Activated CD4-positive, alpha-beta memory T cell treated with anti-CD3 and anti-CD28 coated beads for 36 hours (primary cell): ENCODE measurements at regions of chr10 and their contacts with region 1.

Region 1: DNA sequence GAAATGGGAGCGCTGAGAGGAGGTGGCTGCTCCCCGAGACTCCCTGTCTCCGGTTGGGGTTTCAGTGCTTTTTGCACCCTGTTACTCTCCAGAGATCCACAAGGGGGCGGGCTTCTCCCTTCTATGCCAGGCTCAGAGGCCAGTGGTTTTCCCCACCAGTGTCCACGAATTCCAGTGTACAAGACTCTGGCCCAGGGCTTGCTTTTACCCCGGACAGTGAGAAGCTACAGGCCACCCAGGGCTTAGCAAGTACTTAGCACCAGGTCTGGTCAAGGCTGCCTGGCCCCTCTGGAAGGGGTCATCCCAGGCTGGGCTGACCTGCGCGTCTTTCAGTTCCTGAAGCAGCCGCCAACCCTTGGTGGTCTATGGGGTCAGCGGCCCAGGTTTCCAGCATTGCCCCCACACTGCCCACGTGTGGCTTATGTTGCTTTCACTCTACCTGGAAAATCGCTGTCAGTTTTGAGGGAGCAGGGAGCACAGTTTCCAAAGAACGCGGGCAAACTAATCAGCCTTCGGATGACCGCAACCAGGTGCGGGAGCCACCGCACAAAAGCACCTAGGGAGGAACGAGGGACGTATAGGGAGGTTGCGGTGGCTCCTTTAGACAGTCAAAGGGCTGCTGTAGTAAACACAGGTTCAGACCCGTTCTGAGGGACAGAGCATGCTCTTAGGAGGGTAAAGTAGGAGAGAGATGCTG is 6.8 kb downstream of the CYP26A1 start:
- DNase-seq: peak; percentile 68
- H3K4me3 Mint-ChIP-seq: no peak overlapping the region
- H3K27ac Mint-ChIP-seq: no peak overlapping the region
- H3K4me1 Mint-ChIP-seq: peaks cover 7% of the 10 kb centered on the region
- H3K27me3 Mint-ChIP-seq: peaks cover 40% of the 10 kb centered on the region

Region 2: DNA sequence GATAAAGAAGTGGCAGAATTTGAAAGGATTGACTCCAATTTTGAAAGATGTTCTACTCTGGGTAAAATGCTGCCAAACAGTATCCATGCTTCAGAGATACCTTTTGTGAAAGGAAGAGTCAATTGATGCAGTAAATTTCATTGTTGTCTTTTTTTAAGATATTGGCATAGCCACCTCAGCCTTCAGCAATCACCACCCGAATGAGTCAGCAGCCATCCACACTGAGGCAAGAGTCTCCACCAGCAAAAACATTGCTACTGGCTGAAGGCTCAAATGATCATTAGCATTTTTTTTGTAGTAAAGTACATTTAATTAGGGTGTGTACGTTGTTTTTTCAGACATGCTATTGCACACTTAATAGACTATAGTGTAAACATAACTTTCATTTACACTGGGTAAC is 51.6 kb before region 1 on chr10:
- CTCF ChIA-PET with region 1: no interaction called
- POLR2A ChIA-PET with region 1: no interaction called
- intact Hi-C with region 1: no loop called
- DNase-seq: no peak
- H3K4me3 Mint-ChIP-seq: no peak overlapping the region
- H3K27ac Mint-ChIP-seq: no peak overlapping the region
- H3K4me1 Mint-ChIP-seq: no peaks in the 10 kb centered on the region
- H3K27me3 Mint-ChIP-seq: no peaks in the 10 kb centered on the region

Region 3: GRCh38 chr10:93190372-93190771 is 109.9 kb after region 1 on chr10:
- CTCF ChIA-PET with region 1: no interaction called
- POLR2A ChIA-PET with region 1: no interaction called
- intact Hi-C with region 1: no loop called
- DNase-seq: no peak
- H3K4me3 Mint-ChIP-seq: no peak overlapping the region
- H3K27ac Mint-ChIP-seq: no peak overlapping the region
- H3K4me1 Mint-ChIP-seq: no peaks in the 10 kb centered on the region
- H3K27me3 Mint-ChIP-seq: peaks cover 2% of the 10 kb centered on the region

Region 4: DNA sequence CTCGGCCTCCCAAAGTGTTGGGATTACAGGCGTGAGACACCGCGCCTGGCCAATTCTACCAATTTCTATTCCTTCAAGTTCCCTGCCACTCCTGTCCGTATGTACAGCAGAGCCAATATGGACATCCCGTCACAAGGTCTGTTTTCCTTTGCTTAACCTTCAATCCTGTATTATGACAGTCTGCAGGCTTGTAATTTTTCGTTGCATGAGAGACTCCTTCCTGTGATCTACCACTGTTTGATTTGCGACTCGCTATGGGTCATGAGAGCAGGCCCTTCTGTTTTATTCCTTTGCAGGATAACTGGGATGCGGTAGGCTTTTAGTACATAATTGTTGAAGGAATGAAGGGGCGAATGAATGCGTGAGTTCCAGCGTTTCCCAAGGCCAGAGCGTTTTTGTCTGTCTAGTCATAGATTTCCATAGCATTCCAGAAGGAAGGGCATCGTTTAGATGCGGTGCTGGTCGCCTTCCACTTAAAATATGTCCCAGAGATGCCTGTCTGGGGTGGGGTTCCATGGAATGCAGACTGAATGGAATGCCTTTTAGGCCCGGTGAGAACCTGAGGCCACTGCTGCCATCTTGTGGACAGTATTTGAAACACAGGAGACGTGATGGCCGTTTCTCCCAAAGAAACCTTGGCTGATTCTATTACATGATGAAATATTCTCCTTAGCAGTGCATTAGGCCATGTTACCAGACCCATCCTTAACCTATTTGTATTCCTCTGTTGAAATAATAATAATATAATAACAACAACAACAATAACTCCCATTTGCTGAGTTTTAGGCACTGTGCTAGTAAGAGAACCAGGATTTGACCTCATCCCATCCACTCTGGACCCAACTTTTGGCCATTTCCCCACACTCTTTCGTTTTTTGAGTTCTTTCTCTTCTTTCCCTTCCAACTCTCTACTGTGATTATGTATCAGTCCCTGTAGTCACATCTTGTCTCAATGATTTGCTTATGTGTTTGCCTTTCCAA is 208.4 kb after region 1 on chr10:
- CTCF ChIA-PET with region 1: interaction called, 10 read pairs
- POLR2A ChIA-PET with region 1: no interaction called
- intact Hi-C with region 1: loop called (anchors 1 kb)
- DNase-seq: peak; percentile 61
- H3K4me3 Mint-ChIP-seq: no peak overlapping the region
- H3K27ac Mint-ChIP-seq: no peak overlapping the region
- H3K4me1 Mint-ChIP-seq: no peaks in the 10 kb centered on the region
- H3K27me3 Mint-ChIP-seq: no peaks in the 10 kb centered on the region

Region 5: GRCh38 chr10:93352638-93353383 is 272.3 kb after region 1 on chr10:
- CTCF ChIA-PET with region 1: interaction called, 20 read pairs
- POLR2A ChIA-PET with region 1: no interaction called
- intact Hi-C with region 1: loop called (anchors 1 kb)
- DNase-seq: no peak
- H3K4me3 Mint-ChIP-seq: no peak overlapping the region
- H3K27ac Mint-ChIP-seq: no peak overlapping the region
- H3K4me1 Mint-ChIP-seq: peaks cover 3% of the 10 kb centered on the region
- H3K27me3 Mint-ChIP-seq: peaks cover 11% of the 10 kb centered on the region